Posterior cingulate gyrus (tissue), 11 donors: ENCODE measurements at regions of chr9 and their contacts with region 1.

Region 1: GRCh38 chr9:71121275-71122021 is at the start of gene TRPM3:
- DNase-seq: peak in 9 of 10 donors; percentile 16 to 87 (median 39)

Region 2: GRCh38 chr9:71036501-71036900 is 84.9 kb before region 1 on chr9:
- intact Hi-C with region 1: loop called (anchors 10 kb)
- DNase-seq: no peak

Region 3: DNA sequence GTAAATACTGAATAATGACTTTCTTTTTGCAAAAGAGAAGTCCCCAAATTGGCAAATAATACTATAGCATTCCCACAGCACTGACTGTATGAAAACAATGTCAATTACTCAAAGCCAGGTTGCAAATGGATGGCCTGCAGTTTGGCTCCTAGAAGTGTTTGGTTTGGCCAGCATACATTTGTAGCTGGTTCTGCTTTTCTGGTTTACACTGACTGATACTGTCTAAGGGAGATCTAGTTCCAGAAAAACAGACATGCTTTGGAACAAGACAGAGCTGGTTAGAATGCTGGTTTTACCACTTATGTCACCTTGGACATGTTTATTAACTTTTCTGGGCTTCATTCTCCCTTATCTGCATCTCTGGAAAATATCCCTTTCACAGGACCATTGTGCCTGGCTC is 81.5 kb after region 1 on chr9:
- intact Hi-C with region 1: no loop called
- DNase-seq: no peak

Region 4: DNA sequence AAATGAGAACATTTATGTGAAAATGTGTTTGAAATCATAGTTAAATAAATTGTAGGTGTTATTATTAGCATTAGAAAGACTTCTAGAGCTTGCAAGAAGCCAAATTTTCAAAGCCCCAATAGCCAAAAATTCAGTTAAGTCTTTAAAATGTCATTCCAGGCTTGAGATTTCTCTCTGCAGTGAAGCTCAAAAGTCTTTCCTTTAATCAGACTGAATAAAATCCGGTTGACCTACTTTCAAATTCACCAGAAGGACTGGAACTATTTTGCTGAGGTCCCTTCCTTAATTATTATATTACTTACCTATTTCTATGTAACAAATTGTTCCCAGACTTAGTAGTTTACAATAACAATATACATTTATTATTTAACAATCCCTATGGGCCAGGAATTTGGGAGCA is 112.2 kb after region 1 on chr9:
- intact Hi-C with region 1: loop called (anchors 10 kb)
- DNase-seq: no peak